ENCODE measurements at regions of chr6 and their contacts with region 1.

Region 1: DNA sequence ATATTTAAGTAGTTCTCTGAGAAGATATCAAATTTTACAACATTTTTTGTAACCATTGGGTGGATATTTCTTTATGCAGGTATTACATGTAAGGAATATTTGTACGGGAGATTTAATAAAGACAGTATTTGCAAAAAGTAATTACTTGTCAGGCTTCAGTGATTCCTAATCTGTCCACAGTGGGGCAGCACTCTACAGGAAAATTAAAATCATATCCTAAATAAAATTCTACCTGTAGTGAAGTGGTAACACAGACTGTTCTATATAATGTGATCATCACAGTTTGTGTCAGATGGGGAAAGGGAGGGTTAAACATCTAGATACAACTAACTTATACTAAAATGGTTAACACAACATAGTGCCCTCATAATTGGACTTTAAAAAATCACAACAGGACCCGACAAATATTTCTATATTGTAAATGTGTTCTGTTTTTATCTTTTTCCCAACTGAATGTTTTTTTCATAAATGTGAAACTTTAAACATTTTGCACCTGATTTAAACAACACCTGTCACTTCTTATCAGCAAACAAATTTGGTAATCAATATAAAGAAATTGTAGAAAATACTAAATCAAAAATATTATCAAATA is 145.6 kb upstream of the MANEA start:
- DNase-seq: peak; percentile 18 to 39 (median 28)
- H3K4me3 ChIP-seq: no peak overlapping the region
- H3K4me3 Mint-ChIP-seq: no peak overlapping the region
- H3K27ac ChIP-seq: no peak overlapping the region
- H3K27ac Mint-ChIP-seq: no peak overlapping the region
- H3K4me1 ChIP-seq: no peaks in the 10 kb centered on the region
- H3K4me1 Mint-ChIP-seq: no peaks in the 10 kb centered on the region
- H3K27me3 ChIP-seq: no peaks in the 10 kb centered on the region
- H3K27me3 Mint-ChIP-seq: peaks cover 0 to 4% of the 10 kb centered on the region in 2 donors

Region 2: GRCh38 chr6:96041193-96041592 is 609.5 kb after region 1 on chr6:
- CTCF ChIA-PET with region 1: no interaction called
- POLR2A ChIA-PET with region 1: no interaction called
- intact Hi-C with region 1: no loop called
- DNase-seq: no peak
- H3K4me3 ChIP-seq: no peak overlapping the region
- H3K4me3 Mint-ChIP-seq: no peak overlapping the region
- H3K27ac ChIP-seq: no peak overlapping the region
- H3K27ac Mint-ChIP-seq: no peak overlapping the region
- H3K4me1 ChIP-seq: no peaks in the 10 kb centered on the region
- H3K4me1 Mint-ChIP-seq: no peaks in the 10 kb centered on the region
- H3K27me3 ChIP-seq: no peaks in the 10 kb centered on the region
- H3K27me3 Mint-ChIP-seq: no peaks in the 10 kb centered on the region

Region 3: DNA sequence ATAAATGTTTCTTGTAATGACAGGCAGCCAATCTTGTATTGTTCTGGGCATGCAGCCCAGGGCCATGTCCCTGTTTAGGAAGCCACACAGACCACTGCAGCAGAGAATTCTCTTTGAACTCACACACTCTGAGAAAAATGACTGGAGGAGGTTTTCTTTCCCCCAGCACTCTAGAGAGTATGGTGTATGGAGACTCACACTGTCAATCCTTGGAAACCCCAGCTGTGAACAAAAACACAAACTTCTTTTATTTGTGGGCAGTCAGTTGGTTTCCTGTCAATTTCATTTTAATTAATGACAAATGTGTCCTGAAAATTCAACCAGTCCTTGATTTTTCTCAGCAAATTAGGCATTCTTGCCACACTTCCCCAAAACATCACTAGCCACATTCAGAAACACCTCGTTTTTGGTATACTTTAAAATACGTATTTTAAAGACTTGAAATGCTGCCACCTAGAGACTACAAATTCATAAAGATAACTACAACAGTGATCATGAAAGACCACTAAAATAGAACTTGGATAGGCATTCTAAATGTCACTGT is 1037.0 kb after region 1 on chr6:
- CTCF ChIA-PET with region 1: no interaction called
- POLR2A ChIA-PET with region 1: no interaction called
- intact Hi-C with region 1: loop called (anchors 5 kb)
- DNase-seq: no peak
- H3K4me3 ChIP-seq: no peak overlapping the region
- H3K4me3 Mint-ChIP-seq: no peak overlapping the region
- H3K27ac ChIP-seq: no peak overlapping the region
- H3K27ac Mint-ChIP-seq: no peak overlapping the region
- H3K4me1 ChIP-seq: peaks cover 14% of the 10 kb centered on the region
- H3K4me1 Mint-ChIP-seq: peaks cover 12 to 23% (median 16%) of the 10 kb centered on the region in 4 donors
- H3K27me3 ChIP-seq: no peaks in the 10 kb centered on the region
- H3K27me3 Mint-ChIP-seq: no peaks in the 10 kb centered on the region

Measured in CD4-positive, alpha-beta memory T cell (primary cell).